Body of pancreas (tissue), 4 donors: ENCODE measurements at regions of chr6 and their contacts with region 1.

Region 1: GRCh38 chr6:52410991-52411390 is 9.2 kb upstream of the EFHC1 start:
- DNase-seq: no peak
- ATAC-seq: no peak
- H3K4me3 ChIP-seq: no peak overlapping the region
- H3K27ac ChIP-seq: no peak overlapping the region
- H3K4me1 ChIP-seq: no peaks in the 10 kb centered on the region
- H3K27me3 ChIP-seq: no peaks in the 10 kb centered on the region
- CTCF ChIP-seq: no peak
- POLR2A ChIP-seq: no peak

Region 2: DNA sequence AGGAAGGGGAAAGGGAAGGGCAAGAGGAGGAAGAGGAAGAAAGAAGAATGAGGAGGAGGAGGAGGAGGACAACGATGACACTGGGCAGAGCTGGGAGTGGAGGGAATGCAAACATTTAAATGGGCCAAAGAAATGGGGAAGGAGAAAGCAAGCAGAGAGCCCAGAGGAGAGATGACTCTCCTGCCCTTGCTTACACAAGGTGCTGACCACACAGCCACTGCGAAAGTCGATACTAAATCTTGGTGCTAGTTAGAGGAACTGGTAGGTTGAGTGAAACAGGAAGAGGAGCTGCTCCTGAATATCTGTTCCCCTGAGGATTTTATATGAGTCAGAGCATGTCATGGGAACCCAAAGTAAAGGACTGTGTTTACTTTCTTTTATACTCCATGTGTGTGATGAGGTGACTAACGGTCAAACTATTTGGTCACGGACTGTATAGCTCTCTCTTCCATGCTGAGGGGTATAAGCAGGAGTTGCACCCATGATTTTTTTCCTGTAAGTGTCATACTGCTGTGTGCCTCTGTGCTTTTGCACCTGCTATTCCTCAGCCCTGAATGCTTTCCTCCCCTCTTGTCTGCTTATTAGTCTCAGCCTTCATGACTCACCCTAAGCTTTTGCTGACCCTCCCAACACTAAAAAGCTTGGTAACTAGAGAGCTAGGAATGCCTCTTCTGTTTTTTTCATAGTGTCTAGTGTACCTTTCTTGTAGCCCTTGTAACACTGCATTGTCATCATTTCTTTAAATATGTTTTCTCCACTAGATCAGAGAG is 58.6 kb before region 1 on chr6:
- intact Hi-C with region 1: no loop called
- DNase-seq: peak in 3 of 4 donors; percentile 7 to 62 (median 20)
- ATAC-seq: peak; percentile 83
- H3K4me3 ChIP-seq: no peak overlapping the region
- H3K27ac ChIP-seq: peak overlapping the region in 2 of 4 donors; percentile 11 to 66
- H3K4me1 ChIP-seq: no peaks in the 10 kb centered on the region
- H3K27me3 ChIP-seq: no peaks in the 10 kb centered on the region
- CTCF ChIP-seq: no peak
- POLR2A ChIP-seq: peak in 2 of 3 donors; percentile 14 to 16

Region 3: DNA sequence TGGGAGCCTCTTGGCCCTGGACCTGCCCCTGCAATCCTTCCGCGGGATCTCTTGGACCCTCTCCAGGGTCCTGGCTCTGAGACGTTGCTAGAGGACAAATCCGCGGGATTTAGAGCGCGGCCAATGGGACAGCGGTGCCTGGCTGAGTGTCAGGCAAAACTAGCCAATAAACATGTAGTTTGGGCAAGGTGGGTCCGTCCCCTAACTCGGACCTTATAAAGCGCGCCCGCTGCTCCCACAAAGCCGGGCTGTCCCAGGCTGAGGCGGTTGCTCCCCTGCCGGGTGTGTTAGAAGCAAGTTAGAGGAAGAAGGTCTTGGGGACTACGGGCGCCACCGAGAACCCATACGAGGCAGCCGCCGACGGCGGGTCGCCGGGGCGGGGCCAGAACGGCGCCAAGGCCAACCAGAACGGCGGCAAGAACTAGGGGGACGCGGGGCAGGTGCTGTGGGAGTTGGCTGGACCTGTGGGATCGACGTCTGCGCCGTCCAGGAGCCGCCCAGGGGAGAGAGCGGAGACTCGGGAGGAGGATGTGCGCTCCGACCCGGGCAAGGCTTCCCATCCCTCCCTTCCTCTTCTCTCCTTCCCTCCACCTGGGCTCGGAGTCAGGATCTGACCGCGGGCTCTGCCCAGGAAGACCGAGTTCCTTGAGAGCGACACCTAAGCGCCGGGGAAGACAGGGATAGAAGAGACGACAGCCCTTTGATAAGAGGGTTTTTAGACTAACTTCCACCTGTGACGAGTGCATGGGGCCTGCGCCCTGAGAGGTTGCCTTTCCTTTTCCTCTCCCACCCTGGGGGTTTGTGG is 253.4 kb after region 1 on chr6:
- intact Hi-C with region 1: loop called (anchors 5 kb)
- DNase-seq: peak; percentile 94 to 96 (median 94)
- ATAC-seq: peak; percentile 98
- H3K4me3 ChIP-seq: peak overlapping the region; percentile 34 to 79
- H3K27ac ChIP-seq: peak overlapping the region; percentile 18 to 83 (median 75)
- H3K4me1 ChIP-seq: peaks cover 24% of the 10 kb centered on the region
- H3K27me3 ChIP-seq: no peaks in the 10 kb centered on the region
- CTCF ChIP-seq: peak in 1 of 7 experiments; percentile 0
- POLR2A ChIP-seq: peak; percentile 97 to 99 (median 98)